Panc1 (cell line): ENCODE measurements at regions of chr1 and their contacts with region 1.

Region 1: GRCh38 chr1:173960625-173961024 is 43.5 kb upstream of the SERPINC1 start:
- DNase-seq: no peak
- ATAC-seq: no peak
- H3K4me3 ChIP-seq: no peak overlapping the region
- H3K27ac ChIP-seq: no peak overlapping the region
- H3K4me1 ChIP-seq: no peaks in the 10 kb centered on the region
- H3K27me3 ChIP-seq: no peaks in the 10 kb centered on the region
- CTCF ChIP-seq: no peak

Region 2: DNA sequence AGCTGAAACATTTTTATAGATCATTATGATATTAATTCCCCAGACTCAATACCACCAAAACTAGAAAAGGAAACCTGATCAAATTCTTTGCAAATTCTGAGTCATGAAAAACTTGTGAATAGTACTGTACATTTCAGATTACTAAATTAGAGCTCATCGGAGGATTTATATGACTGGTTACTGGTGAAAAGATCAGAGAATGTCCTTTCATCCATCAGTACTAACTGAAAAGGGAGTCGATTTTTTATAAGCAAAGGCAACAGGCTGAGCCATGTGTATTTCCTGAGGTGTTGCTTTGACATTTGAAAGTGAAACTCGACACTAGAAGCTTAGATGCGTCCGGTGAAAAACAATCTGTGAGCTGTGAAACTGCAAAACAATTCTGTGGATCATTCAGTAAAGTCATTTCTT is 1065.6 kb before region 1 on chr1:
- CTCF ChIA-PET with region 1: no interaction called
- POLR2A ChIA-PET with region 1: interaction called, 20 read pairs
- in situ Hi-C with region 1: no loop called
- intact Hi-C with region 1: no loop called
- DNase-seq: no peak
- ATAC-seq: no peak; the same call in 1 of the 2 replicates
- H3K4me3 ChIP-seq: no peak overlapping the region
- H3K27ac ChIP-seq: no peak overlapping the region
- H3K4me1 ChIP-seq: no peaks in the 10 kb centered on the region
- H3K27me3 ChIP-seq: no peaks in the 10 kb centered on the region
- CTCF ChIP-seq: no peak